ENCODE measurements at regions of chr19 and their contacts with region 1.

Region 1: GRCh38 chr19:3163230-3163886 is 15.2 kb upstream of the S1PR4 start:
- DNase-seq: peak; percentile 54 to 88
- ATAC-seq: peak; percentile 79 to 92 (median 86)
- H3K4me3 ChIP-seq: no peak overlapping the region
- H3K4me3 Mint-ChIP-seq: no peak overlapping the region
- H3K27ac ChIP-seq: no peak overlapping the region
- H3K27ac Mint-ChIP-seq: peak overlapping the region in 1 of 2 donors; percentile 38
- H3K4me1 ChIP-seq: peaks cover 29% of the 10 kb centered on the region
- H3K4me1 Mint-ChIP-seq: peaks cover 5 to 12% of the 10 kb centered on the region in 2 donors
- H3K27me3 ChIP-seq: no peaks in the 10 kb centered on the region
- H3K27me3 Mint-ChIP-seq: no peaks in the 10 kb centered on the region
- CTCF ChIP-seq: peak; percentile 98

Region 2: DNA sequence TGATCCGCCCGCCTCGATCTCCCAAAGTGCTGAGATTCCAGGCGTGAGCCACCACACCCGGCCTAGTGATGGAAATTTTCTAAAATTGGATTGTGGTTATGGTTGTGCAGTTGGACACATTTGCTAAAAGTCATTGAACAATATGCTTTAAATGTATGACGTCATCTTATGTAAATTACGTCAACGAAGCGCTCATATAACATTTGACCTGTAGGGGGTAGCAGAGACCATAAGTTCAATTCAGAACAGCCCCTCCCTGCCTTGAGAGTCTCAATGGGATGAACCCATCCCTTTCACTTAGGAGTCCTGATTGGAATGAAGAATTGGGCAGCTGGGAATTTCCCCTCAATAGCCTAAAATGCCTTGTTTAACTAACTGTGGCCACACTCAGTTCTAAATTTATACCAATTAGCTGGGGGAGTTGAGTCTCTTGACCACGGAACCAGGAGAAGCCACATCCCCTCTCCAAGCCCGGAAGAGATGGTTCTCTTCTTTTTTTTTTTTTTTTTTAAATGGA is 201.3 kb before region 1 on chr19:
- intact Hi-C with region 1: loop called (anchors 1 kb)
- DNase-seq: peak; percentile 28 to 93
- ATAC-seq: peak; percentile 87 to 99 (median 95)
- H3K4me3 ChIP-seq: no peak overlapping the region
- H3K4me3 Mint-ChIP-seq: no peak overlapping the region
- H3K27ac ChIP-seq: no peak overlapping the region
- H3K27ac Mint-ChIP-seq: peak overlapping the region; percentile 67 to 78
- H3K4me1 ChIP-seq: peaks cover 9% of the 10 kb centered on the region
- H3K4me1 Mint-ChIP-seq: no peaks in the 10 kb centered on the region
- H3K27me3 ChIP-seq: no peaks in the 10 kb centered on the region
- H3K27me3 Mint-ChIP-seq: no peaks in the 10 kb centered on the region
- CTCF ChIP-seq: peak; percentile 79

Region 3: GRCh38 chr19:3075895-3076431 is 87.4 kb before region 1 on chr19:
- intact Hi-C with region 1: loop called (anchors 5 kb)
- DNase-seq: peak; percentile 70 to 89
- ATAC-seq: peak; percentile 82 to 98 (median 97)
- H3K4me3 ChIP-seq: no peak overlapping the region
- H3K4me3 Mint-ChIP-seq: no peak overlapping the region
- H3K27ac ChIP-seq: no peak overlapping the region
- H3K27ac Mint-ChIP-seq: no peak overlapping the region
- H3K4me1 ChIP-seq: peaks cover 8% of the 10 kb centered on the region
- H3K4me1 Mint-ChIP-seq: peaks cover 0 to 5% of the 10 kb centered on the region in 2 donors
- H3K27me3 ChIP-seq: no peaks in the 10 kb centered on the region
- H3K27me3 Mint-ChIP-seq: no peaks in the 10 kb centered on the region
- CTCF ChIP-seq: peak; percentile 92

Region 4: GRCh38 chr19:3132971-3133792 is 30.2 kb before region 1 on chr19:
- intact Hi-C with region 1: loop called (anchors 1 kb)
- DNase-seq: peak; percentile 72 to 88
- ATAC-seq: peak; percentile 92 to 95 (median 93)
- H3K4me3 ChIP-seq: no peak overlapping the region
- H3K4me3 Mint-ChIP-seq: peak overlapping the region; percentile 74
- H3K27ac ChIP-seq: peak overlapping the region; percentile 80
- H3K27ac Mint-ChIP-seq: peak overlapping the region; percentile 82 to 92
- H3K4me1 ChIP-seq: peaks cover 30% of the 10 kb centered on the region
- H3K4me1 Mint-ChIP-seq: peaks cover 12 to 16% of the 10 kb centered on the region in 2 donors
- H3K27me3 ChIP-seq: peaks cover 2% of the 10 kb centered on the region
- H3K27me3 Mint-ChIP-seq: peaks cover 5 to 8% of the 10 kb centered on the region in 2 donors
- CTCF ChIP-seq: no peak